ENCODE measurements at regions of chr17 and their contacts with region 1.

Region 1: GRCh38 chr17:45317112-45317928 is 500 bp upstream of the MAP3K14 start:
- DNase-seq: peak; percentile 99 to 100 (median 100)
- H3K4me3 ChIP-seq: peak overlapping the region; percentile 81
- H3K4me3 Mint-ChIP-seq: peak overlapping the region; percentile 83 to 96 (median 90)
- H3K27ac ChIP-seq: peak overlapping the region; percentile 66
- H3K27ac Mint-ChIP-seq: peak overlapping the region; percentile 83 to 98 (median 94)
- H3K4me1 ChIP-seq: peaks cover 86% of the 10 kb centered on the region
- H3K4me1 Mint-ChIP-seq: peaks cover 75 to 89% (median 82%) of the 10 kb centered on the region in 3 donors
- H3K27me3 ChIP-seq: no peaks in the 10 kb centered on the region
- H3K27me3 Mint-ChIP-seq: peaks cover 0 to 3% of the 10 kb centered on the region in 2 donors

Region 2: GRCh38 chr17:45228763-45229539 is 88.4 kb before region 1 on chr17:
- CTCF ChIA-PET with region 1: interaction called, 15 read pairs
- POLR2A ChIA-PET with region 1: interaction called, 18 read pairs
- DNase-seq: peak; percentile 78 to 91 (median 85)
- H3K4me3 ChIP-seq: peak overlapping the region; percentile 95
- H3K4me3 Mint-ChIP-seq: peak overlapping the region; percentile 96 to 100 (median 99)
- H3K27ac ChIP-seq: peak overlapping the region; percentile 98
- H3K27ac Mint-ChIP-seq: peak overlapping the region; percentile 97 to 100 (median 100)
- H3K4me1 ChIP-seq: peaks cover 75% of the 10 kb centered on the region
- H3K4me1 Mint-ChIP-seq: peaks cover 80 to 90% (median 83%) of the 10 kb centered on the region in 3 donors
- H3K27me3 ChIP-seq: no peaks in the 10 kb centered on the region
- H3K27me3 Mint-ChIP-seq: peaks cover 0 to 3% of the 10 kb centered on the region in 2 donors

Region 3: DNA sequence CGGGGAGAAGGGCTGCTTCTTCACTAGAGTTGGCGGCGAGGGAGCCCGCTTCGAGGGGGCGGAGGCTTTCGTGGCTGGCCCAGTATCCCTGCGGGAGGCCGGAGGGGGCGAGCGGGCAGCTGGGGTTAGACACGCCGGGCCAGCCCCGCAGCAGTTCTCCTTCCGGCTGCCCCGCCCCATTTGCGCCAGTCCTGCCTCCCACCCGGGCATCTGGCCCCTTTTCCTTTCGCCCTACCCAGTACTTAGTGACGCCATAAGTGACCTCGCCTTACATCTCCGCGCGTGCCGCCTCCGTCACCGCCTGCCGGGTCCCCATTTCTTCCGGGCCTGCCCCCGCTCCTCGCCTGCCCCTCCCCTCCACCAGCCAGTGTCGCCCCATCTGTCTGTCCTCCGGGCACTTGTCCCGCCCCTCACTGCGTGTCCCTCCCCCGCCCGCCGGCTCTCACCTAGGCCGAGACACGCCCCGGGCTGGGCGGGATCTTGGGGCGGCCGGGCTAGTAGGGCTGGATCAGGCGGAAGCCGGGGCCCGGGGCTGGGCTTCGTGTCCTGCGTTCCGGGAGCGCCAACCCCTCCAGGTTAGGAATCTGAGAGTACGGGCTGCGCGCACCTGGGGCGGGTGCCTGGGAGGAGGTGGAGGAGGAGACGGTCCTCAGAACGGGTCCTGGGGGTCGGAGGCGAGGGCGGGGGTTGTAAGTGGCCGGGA is 69.7 kb before region 1 on chr17:
- CTCF ChIA-PET with region 1: interaction called, 5 read pairs
- POLR2A ChIA-PET with region 1: interaction called, 26 read pairs
- DNase-seq: peak; percentile 92 to 99 (median 98)
- H3K4me3 ChIP-seq: peak overlapping the region; percentile 69
- H3K4me3 Mint-ChIP-seq: peak overlapping the region; percentile 85 to 94 (median 88)
- H3K27ac ChIP-seq: peak overlapping the region; percentile 90
- H3K27ac Mint-ChIP-seq: peak overlapping the region; percentile 93 to 100 (median 97)
- H3K4me1 ChIP-seq: peaks cover 56% of the 10 kb centered on the region
- H3K4me1 Mint-ChIP-seq: peaks cover 31 to 71% (median 40%) of the 10 kb centered on the region in 3 donors
- H3K27me3 ChIP-seq: no peaks in the 10 kb centered on the region
- H3K27me3 Mint-ChIP-seq: no peaks in the 10 kb centered on the region

Region 4: DNA sequence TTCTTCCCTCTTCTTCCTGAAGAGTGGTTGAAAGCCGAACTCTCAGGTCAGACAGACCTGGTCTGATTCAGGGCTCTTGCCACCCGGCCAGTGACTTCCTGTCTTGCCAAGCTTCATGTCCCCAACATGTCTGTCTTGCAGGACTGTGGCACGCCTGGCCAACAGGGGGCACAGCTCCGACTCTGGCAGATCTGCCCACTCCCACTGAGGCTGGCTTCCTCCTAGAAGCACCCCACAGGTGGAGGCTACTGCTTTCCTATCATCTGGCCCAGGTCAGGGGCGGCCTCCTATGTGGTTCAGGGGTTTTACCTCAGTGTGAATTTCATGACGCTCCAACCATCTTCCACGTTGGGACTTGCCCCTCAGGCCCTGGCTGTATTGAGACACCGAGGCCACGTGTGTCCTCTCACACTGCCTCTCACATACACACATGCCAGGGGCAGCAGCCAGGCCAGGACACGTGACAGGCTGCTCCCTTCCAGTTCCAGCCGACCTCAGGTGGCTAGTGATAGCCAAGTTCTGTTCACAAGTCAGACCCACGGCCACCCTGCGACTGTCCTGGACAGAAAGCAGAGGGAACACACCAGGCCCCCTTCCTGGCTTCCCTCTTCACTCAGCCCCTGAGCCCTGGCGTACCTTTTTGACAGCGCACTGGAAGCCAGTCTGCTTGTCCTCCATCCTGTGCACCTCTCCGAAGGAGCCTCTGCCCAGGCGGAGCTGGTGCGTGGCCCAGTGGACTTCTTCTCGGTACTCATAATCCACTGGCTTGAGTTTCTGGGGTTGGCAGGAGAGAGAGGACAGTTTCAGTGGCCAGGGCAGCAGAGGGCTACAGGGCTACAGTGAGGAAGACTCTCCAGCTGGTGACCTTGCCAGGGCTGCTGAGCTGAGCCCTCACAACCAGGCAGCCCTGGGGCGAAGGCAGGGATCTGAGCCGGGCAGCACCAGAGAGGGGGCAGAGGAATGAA is 32.9 kb before region 1 on chr17:
- CTCF ChIA-PET with region 1: interaction called, 18 read pairs
- POLR2A ChIA-PET with region 1: interaction called, 3 read pairs
- DNase-seq: no peak
- H3K4me3 ChIP-seq: no peak overlapping the region
- H3K4me3 Mint-ChIP-seq: no peak overlapping the region
- H3K27ac ChIP-seq: no peak overlapping the region
- H3K27ac Mint-ChIP-seq: peak overlapping the region in 6 of 8 donors; percentile 51 to 82 (median 62)
- H3K4me1 ChIP-seq: no peaks in the 10 kb centered on the region
- H3K4me1 Mint-ChIP-seq: peaks cover 4 to 10% (median 6%) of the 10 kb centered on the region in 3 donors
- H3K27me3 ChIP-seq: no peaks in the 10 kb centered on the region
- H3K27me3 Mint-ChIP-seq: no peaks in the 10 kb centered on the region

Region 5: GRCh38 chr17:45332989-45333701 is 15.8 kb after region 1 on chr17:
- CTCF ChIA-PET with region 1: interaction called, 10 read pairs
- POLR2A ChIA-PET with region 1: interaction called, 14 read pairs
- DNase-seq: no peak
- H3K4me3 ChIP-seq: no peak overlapping the region
- H3K4me3 Mint-ChIP-seq: no peak overlapping the region
- H3K27ac ChIP-seq: peak overlapping the region; percentile 72
- H3K27ac Mint-ChIP-seq: no peak overlapping the region
- H3K4me1 ChIP-seq: no peaks in the 10 kb centered on the region
- H3K4me1 Mint-ChIP-seq: peaks cover 6 to 15% (median 14%) of the 10 kb centered on the region in 3 donors
- H3K27me3 ChIP-seq: no peaks in the 10 kb centered on the region
- H3K27me3 Mint-ChIP-seq: no peaks in the 10 kb centered on the region

Region 6: GRCh38 chr17:45385331-45385997 is 68.1 kb after region 1 on chr17:
- CTCF ChIA-PET with region 1: interaction called, 19 read pairs
- POLR2A ChIA-PET with region 1: interaction called, 4 read pairs
- DNase-seq: peak; percentile 77 to 91 (median 83)
- H3K4me3 ChIP-seq: no peak overlapping the region
- H3K4me3 Mint-ChIP-seq: no peak overlapping the region
- H3K27ac ChIP-seq: no peak overlapping the region
- H3K27ac Mint-ChIP-seq: no peak overlapping the region
- H3K4me1 ChIP-seq: peaks cover 6% of the 10 kb centered on the region
- H3K4me1 Mint-ChIP-seq: peaks cover 0 to 3% (median 2%) of the 10 kb centered on the region in 3 donors
- H3K27me3 ChIP-seq: no peaks in the 10 kb centered on the region
- H3K27me3 Mint-ChIP-seq: peaks cover 8 to 17% of the 10 kb centered on the region in 2 donors

Region 7: DNA sequence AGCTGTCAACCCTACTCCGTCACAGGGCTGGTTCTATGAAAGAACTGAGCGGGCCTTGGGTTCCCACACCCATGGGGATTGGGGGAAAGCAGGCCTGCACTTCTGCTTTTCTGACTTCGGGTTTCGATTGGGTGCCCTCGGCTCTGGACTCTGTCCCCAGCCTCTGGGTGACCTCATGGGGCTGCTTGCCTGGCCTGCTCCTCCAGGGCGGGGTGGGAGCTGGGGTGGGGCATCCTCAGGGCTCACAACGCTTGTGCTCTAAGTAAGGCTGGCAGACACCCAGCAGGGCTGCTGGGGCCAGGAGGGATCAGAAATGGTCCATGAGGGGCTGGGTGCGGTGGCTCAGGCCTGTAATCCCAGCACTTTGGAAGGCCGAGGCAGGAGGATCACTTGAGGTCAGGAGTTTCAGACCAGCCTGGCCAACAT is 96.2 kb after region 1 on chr17:
- CTCF ChIA-PET with region 1: no interaction called
- POLR2A ChIA-PET with region 1: no interaction called
- DNase-seq: no peak
- H3K4me3 ChIP-seq: no peak overlapping the region
- H3K4me3 Mint-ChIP-seq: peak overlapping the region in 1 of 7 donors; percentile 80
- H3K27ac ChIP-seq: no peak overlapping the region
- H3K27ac Mint-ChIP-seq: no peak overlapping the region
- H3K4me1 ChIP-seq: peaks cover 31% of the 10 kb centered on the region
- H3K4me1 Mint-ChIP-seq: peaks cover 29 to 36% (median 29%) of the 10 kb centered on the region in 3 donors
- H3K27me3 ChIP-seq: no peaks in the 10 kb centered on the region
- H3K27me3 Mint-ChIP-seq: peaks cover 0 to 3% of the 10 kb centered on the region in 2 donors

Region 8: DNA sequence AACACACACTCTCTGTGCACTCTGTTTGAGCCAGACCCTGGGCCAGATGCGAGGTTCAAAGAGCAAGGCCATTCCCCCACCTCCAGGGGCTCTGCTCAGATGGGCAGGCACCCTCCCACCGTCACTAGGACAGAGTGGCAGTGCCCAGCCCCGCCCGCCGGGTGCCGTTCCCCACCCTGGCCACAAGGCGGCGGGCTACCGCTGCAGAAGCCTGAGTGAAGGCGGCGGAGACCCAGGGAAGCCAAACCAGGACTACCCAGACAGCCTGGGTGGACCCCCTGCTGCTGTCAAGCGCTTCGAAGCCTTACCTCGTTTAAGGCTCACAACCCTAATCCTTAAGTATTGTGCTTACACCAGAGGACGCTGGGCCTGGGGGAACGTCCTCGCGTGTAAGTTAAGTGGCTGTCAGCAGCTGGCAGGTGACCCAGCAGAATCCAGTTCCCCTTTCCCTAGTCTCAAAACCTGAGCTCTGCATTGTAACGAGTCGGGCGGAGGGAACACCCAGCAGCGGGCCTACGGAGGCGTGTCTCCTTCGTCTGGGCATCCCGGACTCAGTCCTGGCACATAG is 110.8 kb after region 1 on chr17:
- CTCF ChIA-PET with region 1: no interaction called
- POLR2A ChIA-PET with region 1: no interaction called
- DNase-seq: peak; percentile 71 to 83 (median 73)
- H3K4me3 ChIP-seq: peak overlapping the region; percentile 25
- H3K4me3 Mint-ChIP-seq: peak overlapping the region; percentile 14 to 84 (median 69)
- H3K27ac ChIP-seq: no peak overlapping the region
- H3K27ac Mint-ChIP-seq: peak overlapping the region in 7 of 8 donors; percentile 7 to 85 (median 62)
- H3K4me1 ChIP-seq: peaks cover 15% of the 10 kb centered on the region
- H3K4me1 Mint-ChIP-seq: peaks cover 20 to 31% (median 22%) of the 10 kb centered on the region in 3 donors
- H3K27me3 ChIP-seq: no peaks in the 10 kb centered on the region
- H3K27me3 Mint-ChIP-seq: no peaks in the 10 kb centered on the region

Measured in CD8-positive, alpha-beta memory T cell (primary cell).